Brain microvascular endothelial cell (primary cell): ENCODE measurements at regions of chr3 and their contacts with region 1.

Region 1: DNA sequence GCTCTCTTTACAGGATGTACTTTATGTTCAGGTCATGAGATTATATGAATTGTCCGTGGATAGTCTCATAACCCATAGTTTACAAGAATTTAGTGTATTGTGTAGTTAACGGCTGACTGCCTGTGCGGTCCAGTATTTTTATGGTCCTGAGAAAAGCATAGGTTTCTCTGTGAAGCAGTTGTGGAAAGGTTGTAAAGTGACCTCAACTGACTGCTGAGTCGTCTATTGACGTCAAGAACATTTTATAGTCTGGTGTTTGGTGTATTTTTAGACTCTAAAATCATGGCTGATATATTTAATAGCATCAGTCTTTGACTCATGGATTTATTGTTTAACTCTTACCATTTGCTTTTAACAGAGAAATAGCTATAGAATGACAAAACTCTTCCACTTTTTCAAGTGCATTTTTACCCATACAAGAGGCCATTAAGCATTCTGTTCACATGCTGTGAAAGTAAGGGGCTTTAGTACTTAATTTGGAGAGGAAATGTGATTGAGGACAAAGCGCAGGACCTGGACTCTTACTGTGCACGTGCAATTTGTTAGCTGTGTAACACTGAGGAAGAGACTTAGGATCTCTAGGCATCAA is 240.7 kb downstream of the NFKBIZ start:
- DNase-seq: peak; percentile 87
- H3K4me3 ChIP-seq: no peak overlapping the region
- H3K27ac ChIP-seq: peak overlapping the region; percentile 94
- H3K27me3 ChIP-seq: no peaks in the 10 kb centered on the region
- CTCF ChIP-seq: no peak

Region 2: DNA sequence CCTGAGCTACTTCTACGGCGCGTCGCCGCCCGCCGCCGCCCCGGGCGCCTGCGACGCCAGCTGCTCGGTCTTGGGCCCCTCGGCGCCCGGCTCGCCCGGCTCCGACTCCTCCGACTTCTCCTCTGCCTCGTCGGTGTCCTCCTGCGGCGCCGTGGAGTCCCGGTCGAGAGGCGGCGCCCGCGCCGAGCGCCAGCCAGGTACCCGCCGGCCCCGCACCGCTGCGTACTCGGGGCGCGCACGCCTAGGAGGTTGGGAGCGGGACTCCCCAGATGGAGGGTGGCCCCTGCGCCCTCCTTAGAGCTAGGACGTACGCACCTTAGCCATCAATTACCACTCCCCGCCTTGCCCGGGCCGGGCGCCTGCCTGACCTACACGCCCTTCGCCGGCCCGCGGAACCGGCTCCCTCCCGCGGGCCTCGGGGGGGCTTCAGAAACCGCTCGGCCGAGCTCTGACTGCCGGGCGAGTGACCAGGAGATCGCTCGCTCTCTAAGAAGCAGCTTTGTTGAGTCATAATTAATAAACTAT is 240.2 kb before region 1 on chr3:
- in situ Hi-C with region 1: loop called (anchors 25 kb)
- DNase-seq: no peak
- H3K4me3 ChIP-seq: peak overlapping the region; percentile 74
- H3K27ac ChIP-seq: peak overlapping the region; percentile 93
- H3K27me3 ChIP-seq: no peaks in the 10 kb centered on the region
- CTCF ChIP-seq: no peak

Region 3: DNA sequence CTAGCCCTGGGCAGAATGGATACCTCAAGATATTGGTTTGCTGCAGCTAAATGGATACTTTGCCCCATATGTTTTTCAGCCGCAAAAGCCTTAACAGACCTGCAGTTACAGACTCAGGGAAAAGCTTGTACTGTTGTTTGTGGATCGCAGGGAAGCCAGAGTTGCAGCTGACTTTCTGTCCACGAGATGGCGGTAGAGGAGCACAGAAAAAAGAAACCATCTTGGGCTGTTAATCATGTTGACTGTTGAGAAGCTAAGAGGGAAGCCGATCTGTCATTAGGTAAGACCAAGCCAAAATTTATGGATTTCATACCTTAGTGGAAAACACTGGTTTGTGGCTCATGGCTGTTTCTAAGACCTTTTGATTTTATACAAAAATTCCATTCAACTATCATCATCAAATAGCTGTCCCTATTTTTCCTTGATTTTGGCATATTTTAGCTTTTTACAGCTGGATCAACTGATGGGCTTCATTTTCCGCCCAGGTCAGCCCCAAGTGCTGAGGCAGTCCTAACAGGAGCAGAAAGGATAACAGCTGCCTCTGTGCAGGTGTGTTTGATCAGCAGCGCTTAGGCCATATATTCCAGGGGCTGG is 139.2 kb after region 1 on chr3:
- in situ Hi-C with region 1: no loop called
- DNase-seq: peak; percentile 81
- H3K4me3 ChIP-seq: no peak overlapping the region
- H3K27ac ChIP-seq: no peak overlapping the region
- H3K27me3 ChIP-seq: no peaks in the 10 kb centered on the region
- CTCF ChIP-seq: peak; percentile 94